Caco-2 (cell line): ENCODE measurements at regions of chr2 and their contacts with region 1.

Region 1: DNA sequence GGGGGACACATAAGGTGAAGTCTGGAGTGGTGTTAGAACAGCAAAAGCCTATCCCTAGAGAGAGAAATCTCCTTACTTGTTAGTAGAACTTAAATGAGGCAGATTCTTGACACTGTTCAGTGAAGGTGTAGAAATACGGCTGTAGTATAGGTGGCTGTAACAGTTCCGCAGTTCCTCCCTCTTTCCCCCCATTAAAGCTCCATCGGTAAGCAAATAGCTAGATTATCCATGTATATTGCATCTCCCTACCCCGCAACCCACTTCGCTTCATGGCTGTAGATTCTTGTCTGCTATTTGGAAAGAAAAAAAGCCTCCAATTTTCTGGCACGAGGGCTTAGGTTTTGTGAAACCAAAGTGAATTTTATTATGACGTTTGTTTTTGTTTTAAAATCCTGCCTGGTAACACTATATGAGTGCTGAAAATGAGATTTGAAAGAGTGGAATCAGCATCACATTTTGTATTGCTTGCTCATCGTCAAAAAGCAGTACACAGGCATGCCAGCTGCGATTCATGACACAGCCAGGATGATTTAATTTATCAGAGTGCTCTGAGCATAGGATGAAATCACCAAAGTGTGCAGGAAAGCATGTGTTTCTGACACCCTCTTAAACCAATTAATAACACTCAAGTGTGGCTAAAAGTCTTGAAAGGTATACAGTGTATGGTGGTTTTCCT is 1.4 kb downstream of the FAM171B start:
- DNase-seq: no peak
- H3K4me3 ChIP-seq: no peak overlapping the region
- H3K4me3 Mint-ChIP-seq: peak overlapping the region; percentile 91
- H3K27ac Mint-ChIP-seq: peak overlapping the region; percentile 79
- H3K4me1 ChIP-seq: peaks cover 12% of the 10 kb centered on the region
- H3K4me1 Mint-ChIP-seq: peaks cover 9% of the 10 kb centered on the region
- H3K27me3 ChIP-seq: no peaks in the 10 kb centered on the region
- H3K27me3 Mint-ChIP-seq: no peaks in the 10 kb centered on the region
- CTCF ChIP-seq: no peak

Region 2: GRCh38 chr2:186683341-186683740 is 11.9 kb before region 1 on chr2:
- CTCF ChIA-PET with region 1: no interaction called
- POLR2A ChIA-PET with region 1: no interaction called
- intact Hi-C with region 1: loop called (anchors 1 kb)
- DNase-seq: no peak
- H3K4me3 ChIP-seq: no peak overlapping the region
- H3K4me3 Mint-ChIP-seq: no peak overlapping the region
- H3K27ac Mint-ChIP-seq: peak overlapping the region; percentile 0
- H3K4me1 ChIP-seq: no peaks in the 10 kb centered on the region
- H3K4me1 Mint-ChIP-seq: peaks cover 8% of the 10 kb centered on the region
- H3K27me3 ChIP-seq: no peaks in the 10 kb centered on the region
- H3K27me3 Mint-ChIP-seq: no peaks in the 10 kb centered on the region
- CTCF ChIP-seq: no peak

Region 3: DNA sequence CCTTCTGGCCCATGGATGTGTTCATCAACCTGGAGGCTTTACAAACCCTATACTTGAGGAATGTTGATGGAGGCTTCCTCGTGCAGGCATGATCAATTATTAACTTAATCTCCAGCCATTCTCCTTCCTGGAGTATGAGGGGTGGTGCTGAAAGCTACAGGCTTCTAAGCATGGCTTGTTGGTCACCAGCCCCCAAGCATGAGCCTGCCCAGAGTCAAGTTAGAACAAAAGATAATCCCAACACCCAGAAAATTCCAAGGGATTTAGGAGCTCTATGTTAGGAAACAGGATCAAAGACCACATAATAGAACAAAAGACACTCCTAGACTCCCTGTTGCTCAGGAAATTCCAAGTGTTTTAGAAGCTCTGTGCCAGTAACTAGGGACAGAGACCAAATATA is 61.8 kb after region 1 on chr2:
- CTCF ChIA-PET with region 1: interaction called, 4 read pairs
- POLR2A ChIA-PET with region 1: no interaction called
- intact Hi-C with region 1: loop called (anchors 1 kb)
- DNase-seq: peak; percentile 77 to 78
- H3K4me3 ChIP-seq: no peak overlapping the region
- H3K4me3 Mint-ChIP-seq: peak overlapping the region; percentile 37
- H3K27ac Mint-ChIP-seq: peak overlapping the region; percentile 66
- H3K4me1 ChIP-seq: peaks cover 26% of the 10 kb centered on the region
- H3K4me1 Mint-ChIP-seq: peaks cover 22% of the 10 kb centered on the region
- H3K27me3 ChIP-seq: no peaks in the 10 kb centered on the region
- H3K27me3 Mint-ChIP-seq: no peaks in the 10 kb centered on the region
- CTCF ChIP-seq: no peak